IMR-90 (cell line): ENCODE measurements at regions of chr12 and their contacts with region 1.

Region 1: GRCh38 chr12:56104109-56104814 is at the start of gene PA2G4:
- DNase-seq: peak; percentile 98
- ATAC-seq: peak; percentile 97
- H3K4me3 ChIP-seq: peak within 1 kb of the TSS; percentile 88
- H3K27ac ChIP-seq: peak within 1 kb of the TSS; percentile 94
- H3K4me1 ChIP-seq: peaks cover 5% of the 10 kb centered on the region; the same call in 1 of the 2 replicates
- H3K27me3 ChIP-seq: no peaks in the 10 kb centered on the region
- CTCF ChIP-seq: no peak
- POLR2A ChIP-seq: peak; percentile 70
- RAD21 ChIP-seq: no peak; the same call in 1 of the 2 replicates
- total RNA-seq, gene PA2G4: 198 and 251 TPM in 2 replicates

Region 2: GRCh38 chr12:54279866-54280467 is 1824.3 kb before region 1 on chr12 and contains the start of gene CBX5:
- CTCF ChIA-PET with region 1: no interaction called
- POLR2A ChIA-PET with region 1: no interaction called
- dilution Hi-C with region 1: no loop called
- in situ Hi-C with region 1: no loop called
- intact Hi-C with region 1: no loop called
- DNase-seq: peak; percentile 98
- ATAC-seq: peak; percentile 47
- H3K4me3 ChIP-seq: peak within 1 kb of the TSS; percentile 63
- H3K27ac ChIP-seq: peak within 1 kb of the TSS; percentile 82
- H3K4me1 ChIP-seq: peaks cover 3% of the 10 kb centered on the region
- H3K27me3 ChIP-seq: no peaks in the 10 kb centered on the region
- CTCF ChIP-seq: no peak
- POLR2A ChIP-seq: 0 out of 2 replicates have a peak, but pooled peaks have one; percentile 9
- RAD21 ChIP-seq: no peak
- total RNA-seq, gene CBX5: 40.9 and 66.9 TPM in 2 replicates

Region 3: GRCh38 chr12:56053407-56053893 is 50.8 kb before region 1 on chr12:
- CTCF ChIA-PET with region 1: no interaction called
- POLR2A ChIA-PET with region 1: no interaction called
- dilution Hi-C with region 1: no loop called
- in situ Hi-C with region 1: no loop called
- intact Hi-C with region 1: no loop called
- DNase-seq: no peak
- ATAC-seq: peak; percentile 71
- H3K4me3 ChIP-seq: no peak overlapping the region
- H3K27ac ChIP-seq: no peak overlapping the region
- H3K4me1 ChIP-seq: peaks cover 2% of the 10 kb centered on the region; the same call in 1 of the 2 replicates
- H3K27me3 ChIP-seq: no peaks in the 10 kb centered on the region
- CTCF ChIP-seq: no peak
- POLR2A ChIP-seq: no peak
- RAD21 ChIP-seq: no peak

Region 4: DNA sequence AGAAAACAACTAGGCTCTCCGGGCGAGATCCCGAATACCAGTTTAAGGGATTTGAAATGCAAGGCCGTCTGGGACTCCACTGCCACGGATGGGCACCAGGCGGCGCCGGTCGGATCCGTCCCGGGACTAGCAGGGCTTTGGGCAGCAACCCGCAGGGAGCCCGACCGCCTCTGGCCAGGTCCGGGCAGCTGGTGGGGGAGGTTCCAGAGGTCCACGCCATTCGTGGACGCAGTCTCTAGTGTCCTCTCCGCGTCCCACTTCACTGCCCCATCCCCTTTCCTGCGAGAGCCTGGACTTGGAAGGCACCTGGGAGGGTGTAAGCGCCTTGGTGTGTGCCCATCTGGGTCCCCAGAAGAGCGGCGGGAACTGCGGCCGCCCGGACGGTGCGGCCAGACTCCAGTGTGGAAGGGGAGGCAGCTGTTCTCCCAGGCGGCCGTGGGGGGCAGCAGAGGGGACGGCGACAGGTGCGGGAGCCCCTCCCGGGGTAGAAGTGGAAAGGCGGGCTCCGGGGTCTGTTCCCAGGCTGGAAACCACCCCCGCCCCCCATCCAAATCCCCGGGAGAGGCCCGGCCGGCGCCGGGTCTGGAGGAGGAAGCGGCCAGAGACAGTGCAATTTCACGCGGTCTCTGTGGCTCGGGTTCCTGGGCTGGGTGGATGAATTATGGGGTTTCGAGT is 25.1 kb before region 1 on chr12:
- CTCF ChIA-PET with region 1: interaction called, 3 read pairs
- POLR2A ChIA-PET with region 1: no interaction called
- dilution Hi-C with region 1: no loop called
- in situ Hi-C with region 1: no loop called
- intact Hi-C with region 1: loop called (anchors 1 kb)
- DNase-seq: peak; percentile 74
- ATAC-seq: peak; percentile 90
- H3K4me3 ChIP-seq: peak overlapping the region; percentile 67
- H3K27ac ChIP-seq: peak overlapping the region; percentile 47; the same call in 1 of the 2 replicates
- H3K4me1 ChIP-seq: peaks cover 4% of the 10 kb centered on the region; the same call in 1 of the 2 replicates
- H3K27me3 ChIP-seq: peaks cover 38% of the 10 kb centered on the region
- CTCF ChIP-seq: peak; percentile 69
- POLR2A ChIP-seq: no peak
- RAD21 ChIP-seq: peak; percentile 53

Region 5: DNA sequence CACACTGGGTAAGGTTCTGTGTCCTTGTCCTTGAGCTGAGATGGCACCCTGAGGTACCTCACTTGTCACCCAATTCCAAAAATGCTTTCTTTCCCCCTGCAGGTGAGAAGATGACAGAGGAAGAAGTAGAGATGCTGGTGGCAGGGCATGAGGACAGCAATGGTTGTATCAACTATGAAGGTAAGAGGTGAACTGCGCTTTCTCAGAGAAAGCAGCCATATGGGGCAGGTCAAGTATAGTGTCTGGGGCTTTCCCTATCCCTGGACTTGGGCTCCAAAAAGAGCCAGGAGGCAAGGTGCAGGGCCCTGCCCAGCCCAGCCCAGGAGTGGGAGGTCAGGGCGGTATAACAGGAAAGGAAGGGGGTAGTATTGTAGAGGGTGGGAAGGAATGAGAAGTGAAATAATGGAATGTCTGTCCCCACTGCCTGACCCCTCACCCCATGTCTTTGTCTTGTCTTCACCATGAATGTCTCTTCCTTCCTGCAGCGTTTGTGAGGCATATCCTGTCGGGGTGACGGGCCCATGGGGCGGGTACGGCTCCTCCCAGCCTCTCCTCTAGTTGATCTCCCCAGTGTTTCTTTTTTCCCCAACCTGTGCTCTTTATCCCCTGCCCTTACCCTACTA is 56.0 kb after region 1 on chr12:
- CTCF ChIA-PET with region 1: no interaction called
- POLR2A ChIA-PET with region 1: no interaction called
- dilution Hi-C with region 1: no loop called
- in situ Hi-C with region 1: no loop called
- intact Hi-C with region 1: no loop called
- DNase-seq: peak; percentile 35
- ATAC-seq: no peak
- H3K4me3 ChIP-seq: peak overlapping the region; percentile 73
- H3K27ac ChIP-seq: peak overlapping the region; percentile 90
- H3K4me1 ChIP-seq: peaks cover 15% of the 10 kb centered on the region
- H3K27me3 ChIP-seq: no peaks in the 10 kb centered on the region
- CTCF ChIP-seq: no peak
- POLR2A ChIP-seq: peak; percentile 57
- RAD21 ChIP-seq: no peak

Region 6: DNA sequence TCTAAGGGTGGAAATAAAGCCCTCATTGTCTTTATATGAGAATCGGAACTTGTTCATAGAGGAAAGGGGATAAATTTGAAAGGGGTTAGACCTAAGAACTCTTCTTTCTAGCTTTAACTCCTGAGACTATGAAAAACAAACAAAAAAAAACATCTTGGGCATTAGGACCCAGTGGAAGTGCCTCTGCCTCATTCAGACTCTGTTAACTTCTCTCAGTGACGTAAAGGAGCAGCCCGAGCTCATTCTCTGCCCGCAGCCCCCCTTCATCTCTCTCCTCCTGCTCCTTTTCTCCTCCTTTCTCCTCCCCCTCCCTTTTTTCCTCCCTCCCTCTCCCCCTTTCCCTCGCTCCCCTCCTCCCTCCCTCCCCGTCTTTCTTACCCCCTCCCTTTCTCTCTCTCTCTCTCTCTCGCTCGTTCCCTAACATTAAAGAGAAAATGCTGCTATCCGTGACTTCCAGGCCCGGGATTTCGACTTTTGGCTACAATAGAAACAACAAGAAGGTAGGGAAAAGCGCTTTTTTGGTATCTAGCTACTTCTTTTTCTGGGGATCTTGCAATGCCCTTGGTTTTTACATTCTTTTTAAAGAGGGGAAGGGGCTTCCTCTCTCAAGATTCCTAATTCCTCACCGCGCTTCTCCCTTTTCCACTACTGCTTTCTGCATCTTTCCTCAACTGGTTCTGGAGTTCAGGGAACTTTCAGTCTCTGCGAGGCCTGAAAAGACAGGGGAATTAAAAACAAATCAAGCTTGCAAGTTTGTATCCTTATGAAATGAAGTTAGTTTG is 417.5 kb after region 1 on chr12 and contains the start of gene RBMS2:
- CTCF ChIA-PET with region 1: no interaction called
- POLR2A ChIA-PET with region 1: no interaction called
- dilution Hi-C with region 1: no loop called
- in situ Hi-C with region 1: no loop called
- intact Hi-C with region 1: no loop called
- DNase-seq: peak; percentile 94
- ATAC-seq: peak; percentile 86
- H3K4me3 ChIP-seq: peak within 1 kb of the TSS; percentile 100
- H3K27ac ChIP-seq: peak within 1 kb of the TSS; percentile 95
- H3K4me1 ChIP-seq: peaks cover 8% of the 10 kb centered on the region
- H3K27me3 ChIP-seq: no peaks in the 10 kb centered on the region
- CTCF ChIP-seq: no peak
- POLR2A ChIP-seq: no peak
- RAD21 ChIP-seq: no peak
- total RNA-seq, gene RBMS2: 28.3 and 38.0 TPM in 2 replicates